HCT116 (cell line): ENCODE measurements at regions of chr6 and their contacts with region 1.

Region 1: GRCh38 chr6:18503593-18504231 is 116.6 kb downstream of the RNF144B start:
- DNase-seq: peak; percentile 61
- ATAC-seq: peak; percentile 94
- H3K4me3 ChIP-seq: no peak overlapping the region
- H3K27ac ChIP-seq: no peak overlapping the region
- H3K4me1 ChIP-seq: no peaks in the 10 kb centered on the region; a peak in 1 of 4 replicates
- H3K27me3 ChIP-seq: no peaks in the 10 kb centered on the region
- CTCF ChIP-seq: peak; percentile 88 to 92 (median 91)
- POLR2A ChIP-seq: no peak
- RAD21 ChIP-seq: peak; percentile 99

Region 2: GRCh38 chr6:17156112-17156921 is 1347.4 kb before region 1 on chr6:
- CTCF ChIA-PET with region 1: no interaction called
- POLR2A ChIA-PET with region 1: no interaction called
- RAD21 ChIA-PET with region 1: interaction called in 1 of 2 experiments, 3 read pairs
- intact Hi-C with region 1: loop called (anchors 1 kb)
- DNase-seq: peak; percentile 80
- ATAC-seq: peak; percentile 81
- H3K4me3 ChIP-seq: no peak overlapping the region
- H3K27ac ChIP-seq: no peak overlapping the region
- H3K4me1 ChIP-seq: no peaks in the 10 kb centered on the region
- H3K27me3 ChIP-seq: no peaks in the 10 kb centered on the region
- CTCF ChIP-seq: peak; percentile 70 to 92 (median 86)
- POLR2A ChIP-seq: no peak
- RAD21 ChIP-seq: peak; percentile 94

Region 3: DNA sequence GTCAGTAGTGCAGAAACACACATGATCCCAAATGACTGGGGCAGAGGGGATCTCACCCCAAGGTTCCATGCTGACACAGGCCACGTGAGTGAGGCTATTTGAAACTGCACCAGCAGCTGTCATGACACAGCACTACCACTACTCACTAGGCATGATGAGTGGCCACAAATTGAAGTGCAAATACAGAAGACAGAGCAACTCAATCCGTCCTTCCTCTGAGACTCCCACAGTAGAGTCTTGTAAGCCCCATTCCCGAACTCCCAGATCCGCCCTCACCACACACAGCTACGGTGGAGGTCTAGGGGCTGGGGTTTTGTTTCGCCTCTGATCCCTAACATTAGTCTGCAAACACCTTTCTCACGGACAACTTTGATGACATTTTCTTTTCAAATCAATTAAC is 683.7 kb before region 1 on chr6:
- CTCF ChIA-PET with region 1: interaction called, 3 read pairs
- POLR2A ChIA-PET with region 1: no interaction called
- RAD21 ChIA-PET with region 1: no interaction called
- intact Hi-C with region 1: loop called (anchors 5 kb)
- DNase-seq: no peak
- ATAC-seq: peak; percentile 44; the same call in 1 of the 2 replicates
- H3K4me3 ChIP-seq: no peak overlapping the region
- H3K27ac ChIP-seq: no peak overlapping the region
- H3K4me1 ChIP-seq: peaks cover 4 to 5% of the 10 kb centered on the region in 2 experiments; a peak in 2 of 4 replicates
- H3K27me3 ChIP-seq: no peaks in the 10 kb centered on the region
- CTCF ChIP-seq: 0 out of 6 replicates have a peak, but pooled peaks of 2 of the 3 experiments have one; percentile 5 to 9
- POLR2A ChIP-seq: no peak
- RAD21 ChIP-seq: no peak

Region 4: DNA sequence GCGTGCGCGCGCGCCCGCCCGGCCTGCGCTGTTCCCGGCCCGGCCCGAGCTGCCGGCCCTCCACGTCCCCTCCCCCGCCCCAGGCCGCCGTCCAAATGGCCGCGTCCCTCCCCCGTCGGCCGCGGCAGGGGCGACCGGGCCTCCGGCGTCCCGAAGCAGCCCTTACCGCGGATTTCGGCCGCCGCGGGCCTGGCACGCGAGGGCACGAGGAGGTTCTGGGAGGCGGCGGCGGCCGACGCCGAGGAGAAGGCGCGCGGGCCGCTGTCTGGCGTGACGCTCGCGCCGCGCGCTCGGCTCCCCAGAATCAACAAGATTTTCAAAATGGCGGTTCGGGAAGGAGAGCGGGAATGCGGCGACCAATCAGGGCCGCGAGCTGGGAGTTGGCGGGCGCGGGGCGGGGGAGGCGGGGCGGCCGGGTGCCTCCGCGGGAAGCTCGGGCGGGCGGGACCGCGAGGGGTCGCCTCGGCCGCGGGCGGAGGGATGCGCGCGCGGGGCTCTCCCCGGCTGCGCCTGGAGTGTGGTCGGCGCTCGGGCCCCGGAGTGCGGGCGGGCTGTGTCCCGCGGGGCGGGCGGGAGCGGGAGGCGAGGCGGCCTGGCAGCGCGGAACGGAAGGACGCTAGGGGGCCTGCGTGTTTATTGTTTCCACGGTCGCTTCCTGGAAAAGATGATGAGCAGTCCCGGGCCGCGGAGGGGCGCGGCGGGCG is 239.3 kb before region 1 on chr6 and contains the start of gene DEK:
- CTCF ChIA-PET with region 1: no interaction called
- POLR2A ChIA-PET with region 1: no interaction called
- RAD21 ChIA-PET with region 1: no interaction called
- intact Hi-C with region 1: loop called (anchors 1 kb)
- DNase-seq: peak; percentile 58
- ATAC-seq: peak; percentile 84
- H3K4me3 ChIP-seq: peak within 1 kb of the TSS; percentile 79 to 91
- H3K27ac ChIP-seq: peak within 1 kb of the TSS; percentile 85
- H3K4me1 ChIP-seq: peaks cover 21 to 51% of the 10 kb centered on the region in 2 experiments
- H3K27me3 ChIP-seq: no peaks in the 10 kb centered on the region
- CTCF ChIP-seq: peak in 2 of 3 experiments; percentile 36 to 39; a peak in 3 of 6 replicates
- POLR2A ChIP-seq: no peak
- RAD21 ChIP-seq: peak; percentile 37; the same call in 1 of the 2 replicates
- total RNA-seq, gene DEK: 108 TPM

Region 5: DNA sequence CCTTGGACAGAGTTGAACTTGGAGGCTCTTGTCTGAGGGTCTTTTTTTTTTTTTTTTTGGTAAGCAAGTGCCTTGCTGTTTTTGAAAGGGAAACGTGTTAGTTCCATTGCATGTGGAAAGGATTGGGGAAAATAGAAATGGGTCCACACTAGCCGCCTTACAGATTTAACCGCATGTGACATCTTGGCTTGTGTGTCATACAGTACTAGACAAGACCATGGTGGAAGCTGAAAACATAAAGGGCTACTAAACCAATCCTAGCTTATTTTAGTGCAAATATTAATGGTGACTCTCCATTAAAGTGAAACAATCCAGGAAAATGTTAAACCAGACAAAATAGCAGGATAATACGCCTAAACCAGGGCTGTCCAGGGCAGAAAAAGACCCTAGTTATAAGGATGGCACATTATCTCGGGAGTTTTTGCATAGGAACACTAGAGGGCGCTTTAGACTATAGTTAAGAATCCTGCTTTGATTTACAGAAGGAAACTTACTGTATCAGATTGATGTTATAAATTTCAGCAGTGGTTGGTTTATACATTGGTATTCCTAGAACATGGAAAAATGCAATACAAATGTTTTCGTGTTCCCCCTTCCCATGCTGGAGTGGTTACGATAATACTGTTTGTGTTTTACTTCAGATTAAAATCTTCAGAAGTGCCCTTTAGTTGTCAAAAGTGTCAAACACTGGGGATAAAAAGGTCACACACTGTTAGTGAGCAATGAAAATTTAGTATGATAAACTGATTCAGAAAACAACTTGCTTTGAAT is 179.6 kb before region 1 on chr6:
- CTCF ChIA-PET with region 1: interaction called, 35 read pairs
- POLR2A ChIA-PET with region 1: no interaction called
- RAD21 ChIA-PET with region 1: interaction called, 3 read pairs
- intact Hi-C with region 1: loop called (anchors 1 kb)
- DNase-seq: peak; percentile 35
- ATAC-seq: peak; percentile 84
- H3K4me3 ChIP-seq: no peak overlapping the region
- H3K27ac ChIP-seq: no peak overlapping the region
- H3K4me1 ChIP-seq: no peaks in the 10 kb centered on the region
- H3K27me3 ChIP-seq: no peaks in the 10 kb centered on the region
- CTCF ChIP-seq: peak; percentile 59 to 83 (median 69)
- POLR2A ChIP-seq: no peak
- RAD21 ChIP-seq: peak; percentile 88

Region 6: DNA sequence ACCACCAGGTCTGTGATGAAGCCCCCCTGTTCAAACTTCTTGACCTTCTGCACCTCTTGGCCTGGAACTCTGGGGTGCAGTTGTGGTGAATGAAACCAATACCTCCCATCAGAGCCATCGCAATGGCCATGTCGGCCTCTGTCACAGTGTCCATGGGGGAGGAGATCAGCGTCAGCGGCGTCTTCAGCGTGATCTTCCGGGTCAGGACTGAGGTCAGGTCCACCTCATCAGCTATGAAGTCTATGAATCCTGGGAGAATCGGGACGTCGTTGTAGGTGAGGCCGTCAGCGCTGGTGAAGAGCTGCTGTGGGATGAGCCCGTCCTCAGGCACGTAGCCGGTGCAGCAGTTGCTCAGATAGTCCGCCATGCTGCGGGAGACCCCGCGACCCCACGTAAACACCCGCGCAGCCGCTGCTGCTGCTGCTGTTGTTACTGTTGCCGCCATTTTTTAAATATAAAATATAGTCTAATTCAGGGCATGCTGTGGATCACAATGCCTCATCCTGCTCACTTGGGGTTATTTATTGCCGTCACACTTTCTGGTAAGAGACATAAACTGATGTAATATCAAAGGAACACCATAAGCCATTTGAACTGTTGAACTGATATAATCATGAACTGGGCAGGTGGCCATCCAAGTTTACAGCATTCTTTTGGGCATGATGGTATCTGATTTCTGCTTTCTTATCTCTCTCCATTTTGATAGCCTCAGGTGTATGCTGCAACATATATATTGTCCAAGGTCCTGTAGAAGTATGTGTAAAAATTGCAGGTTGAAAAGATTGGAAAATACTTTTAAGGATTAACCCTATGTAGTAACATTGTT is 135.2 kb before region 1 on chr6:
- CTCF ChIA-PET with region 1: no interaction called
- POLR2A ChIA-PET with region 1: no interaction called
- RAD21 ChIA-PET with region 1: no interaction called
- intact Hi-C with region 1: no loop called
- DNase-seq: no peak
- ATAC-seq: no peak
- H3K4me3 ChIP-seq: no peak overlapping the region
- H3K27ac ChIP-seq: no peak overlapping the region
- H3K4me1 ChIP-seq: no peaks in the 10 kb centered on the region
- H3K27me3 ChIP-seq: no peaks in the 10 kb centered on the region
- CTCF ChIP-seq: no peak
- POLR2A ChIP-seq: no peak
- RAD21 ChIP-seq: no peak

Region 7: DNA sequence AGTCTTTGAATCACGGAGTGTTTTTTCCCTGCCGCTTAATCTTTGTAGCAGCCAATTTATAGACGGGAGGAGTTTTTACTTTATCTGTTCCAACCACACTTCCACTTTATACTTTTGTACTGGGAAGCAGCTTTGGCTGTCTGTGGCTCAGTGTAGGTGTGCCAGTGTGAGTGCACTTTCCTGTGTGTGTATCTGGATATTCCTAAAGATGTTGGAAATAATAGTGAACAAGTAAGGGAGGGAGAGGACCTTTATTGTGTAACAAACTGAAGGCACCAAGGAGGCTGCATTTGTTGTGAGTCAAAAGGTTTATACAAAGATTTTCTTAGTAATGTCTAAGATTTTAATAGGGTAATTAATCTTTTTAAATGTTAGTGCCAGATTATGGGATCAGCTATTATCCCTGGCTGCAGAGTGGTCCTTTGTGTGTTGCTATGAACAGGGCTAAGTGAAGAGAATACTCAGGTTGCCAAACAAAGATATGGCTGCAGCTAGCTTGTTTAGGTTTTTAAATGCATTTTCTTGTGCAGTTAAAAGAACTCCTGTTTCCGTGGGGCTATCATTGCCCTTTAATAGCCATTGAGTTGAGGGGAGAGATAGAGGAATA is 109.7 kb after region 1 on chr6:
- CTCF ChIA-PET with region 1: no interaction called
- POLR2A ChIA-PET with region 1: no interaction called
- RAD21 ChIA-PET with region 1: no interaction called
- intact Hi-C with region 1: no loop called
- DNase-seq: no peak
- ATAC-seq: no peak
- H3K4me3 ChIP-seq: no peak overlapping the region
- H3K27ac ChIP-seq: no peak overlapping the region
- H3K4me1 ChIP-seq: no peaks in the 10 kb centered on the region
- H3K27me3 ChIP-seq: no peaks in the 10 kb centered on the region
- CTCF ChIP-seq: no peak
- POLR2A ChIP-seq: no peak
- RAD21 ChIP-seq: no peak

Region 8: DNA sequence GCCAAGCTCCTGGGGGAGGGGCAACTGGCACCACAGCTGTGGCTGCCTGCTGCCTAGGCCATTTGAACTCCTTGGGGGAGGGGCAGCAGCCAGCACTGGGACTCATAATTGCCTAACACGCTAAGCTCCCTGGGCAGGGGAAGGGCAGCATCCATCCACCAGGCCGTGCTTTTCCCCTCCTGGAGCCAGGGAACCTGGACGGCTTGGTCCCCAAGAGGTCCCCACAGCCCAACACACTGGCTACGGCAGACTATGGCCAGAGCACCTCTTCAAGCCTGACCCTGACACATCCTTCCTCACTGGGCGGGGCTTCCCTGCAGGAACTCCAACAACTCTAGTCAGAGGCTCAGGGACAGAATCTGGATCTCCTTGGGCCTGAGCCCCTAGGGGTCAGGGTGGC is 152.8 kb after region 1 on chr6:
- CTCF ChIA-PET with region 1: no interaction called
- POLR2A ChIA-PET with region 1: no interaction called
- RAD21 ChIA-PET with region 1: no interaction called
- intact Hi-C with region 1: no loop called
- DNase-seq: no peak
- ATAC-seq: no peak
- H3K4me3 ChIP-seq: no peak overlapping the region
- H3K27ac ChIP-seq: no peak overlapping the region
- H3K4me1 ChIP-seq: no peaks in the 10 kb centered on the region
- H3K27me3 ChIP-seq: no peaks in the 10 kb centered on the region
- CTCF ChIP-seq: no peak
- POLR2A ChIP-seq: no peak
- RAD21 ChIP-seq: no peak